Heart right ventricle (tissue), 16 donors: ENCODE measurements at regions of chr16 and their contacts with region 1.

Region 1: GRCh38 chr16:2429034-2429770 is at the start of gene CCNF:
- DNase-seq: peak; percentile 97 to 99
- ATAC-seq: peak; percentile 97 to 99 (median 99)
- H3K4me3 ChIP-seq: peak within 1 kb of the TSS; percentile 41 to 98 (median 84)
- H3K27ac ChIP-seq: peak within 1 kb of the TSS in 9 of 10 donors; percentile 50 to 89 (median 77)
- H3K4me1 ChIP-seq: peaks cover 6 to 22% (median 19%) of the 10 kb centered on the region in 9 donors
- H3K27me3 ChIP-seq: no peaks in the 10 kb centered on the region
- CTCF ChIP-seq: peak in 3 of 9 donors; percentile 12 to 32 (median 22)
- total RNA-seq, gene CCNF: 0.62 to 3.4 (median 1.1) TPM

Region 2: DNA sequence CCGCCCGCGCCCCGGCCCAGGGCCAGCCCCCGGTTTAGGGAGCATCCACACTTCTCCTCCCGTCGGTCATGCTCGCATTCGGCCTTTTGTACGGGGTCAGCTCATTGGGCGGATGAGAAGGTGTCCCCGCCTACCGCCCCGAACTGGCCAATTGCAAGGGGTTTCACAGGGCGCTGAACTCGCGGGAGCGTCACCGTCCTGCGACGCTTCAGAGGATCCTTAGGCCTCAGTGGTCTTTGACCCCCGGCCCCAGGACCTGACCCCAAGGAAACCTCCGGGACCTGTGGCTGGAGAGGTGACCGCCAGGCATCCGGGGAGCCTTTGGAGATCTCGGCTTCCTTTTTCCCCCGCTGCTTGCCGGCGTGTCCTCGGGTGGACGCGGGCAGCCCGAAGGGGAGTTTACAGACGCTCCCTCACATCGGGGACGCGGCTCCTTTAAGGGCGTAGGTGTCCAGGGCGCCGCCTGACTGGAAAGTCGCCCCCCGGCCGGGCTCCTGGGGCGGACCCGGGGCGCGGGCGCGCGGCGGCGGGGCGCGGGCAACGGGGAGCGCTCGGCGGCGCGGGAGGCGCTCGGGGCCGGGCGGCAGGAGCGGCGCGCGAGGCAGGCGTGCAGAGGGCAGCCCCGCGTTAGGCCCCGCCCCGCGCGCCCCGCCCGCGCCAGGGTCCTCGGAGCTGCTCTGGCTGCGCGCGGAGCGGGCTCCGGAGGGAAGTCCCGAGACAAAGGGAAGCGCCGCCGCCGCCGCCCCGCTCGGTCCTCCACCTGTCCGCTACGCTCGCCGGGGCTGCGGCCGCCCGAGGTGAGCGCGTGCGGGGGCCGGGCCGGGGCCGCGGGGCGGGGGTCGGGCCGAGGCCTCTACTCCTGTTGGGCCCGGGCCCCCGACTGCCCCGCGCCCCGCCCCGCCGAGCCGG is 1120.0 kb before region 1 on chr16 and contains the start of gene UBE2I:
- intact Hi-C with region 1: no loop called
- DNase-seq: peak; percentile 96 to 98
- ATAC-seq: peak; percentile 87 to 94 (median 88)
- H3K4me3 ChIP-seq: peak within 1 kb of the TSS; percentile 60 to 99 (median 84)
- H3K27ac ChIP-seq: peak within 1 kb of the TSS; percentile 96 to 100 (median 99)
- H3K4me1 ChIP-seq: peaks cover 21 to 41% (median 36%) of the 10 kb centered on the region in 9 donors
- H3K27me3 ChIP-seq: no peaks in the 10 kb centered on the region
- CTCF ChIP-seq: no peak
- total RNA-seq, gene UBE2I: 70.6 to 99.8 (median 84.6) TPM

Region 3: DNA sequence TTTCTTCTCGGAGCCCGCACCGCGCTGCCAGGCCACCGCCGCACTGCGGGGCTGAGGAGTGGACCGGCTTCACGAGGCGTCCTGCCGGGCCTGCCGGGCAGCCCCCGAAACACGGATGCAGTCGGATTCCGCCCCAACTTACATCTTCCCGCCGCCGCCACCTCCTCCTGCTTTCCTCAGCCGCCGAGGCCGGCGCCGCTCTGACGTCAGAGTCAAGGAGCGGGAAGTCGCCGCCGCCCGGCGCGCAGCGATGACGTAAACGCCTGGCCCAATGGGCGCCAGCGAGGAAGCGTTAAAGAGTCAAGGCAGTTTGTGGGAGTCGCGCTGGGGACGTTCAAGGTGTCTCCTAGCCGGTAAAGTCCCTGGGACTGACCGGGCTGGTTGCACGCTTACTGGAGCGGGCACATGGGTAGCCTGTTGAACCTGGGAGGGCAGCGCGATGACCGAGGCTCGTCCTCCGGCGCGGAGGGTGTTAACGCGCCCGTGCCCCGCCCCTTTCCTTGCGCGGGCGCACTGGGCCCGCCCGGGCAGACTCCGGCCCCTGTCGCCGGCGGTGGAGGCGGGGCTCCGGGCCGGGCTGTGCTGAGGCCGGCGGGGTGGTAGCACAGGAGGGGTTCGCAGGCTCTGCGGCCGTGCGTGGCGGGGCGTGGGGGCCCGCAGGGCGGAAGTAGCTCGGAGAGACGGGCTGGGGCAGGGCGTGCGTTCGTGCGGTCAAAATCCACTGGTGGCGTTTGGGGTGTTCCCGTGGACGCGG is 161.1 kb before region 1 on chr16 and contains the start of gene RNPS1:
- intact Hi-C with region 1: loop called in 1 of 10 experiments (anchors 5 kb)
- DNase-seq: peak; percentile 96 to 97
- ATAC-seq: peak; percentile 95 to 99 (median 98)
- H3K4me3 ChIP-seq: peak within 1 kb of the TSS; percentile 53 to 97 (median 87)
- H3K27ac ChIP-seq: peak within 1 kb of the TSS; percentile 80 to 100 (median 98)
- H3K4me1 ChIP-seq: peaks cover 7 to 46% (median 40%) of the 10 kb centered on the region in 9 donors
- H3K27me3 ChIP-seq: no peaks in the 10 kb centered on the region
- CTCF ChIP-seq: no peak
- total RNA-seq, gene RNPS1: 103 to 128 (median 118) TPM

Region 4: GRCh38 chr16:2340564-2341455 is 88.4 kb before region 1 on chr16 and contains the start of gene ABCA3:
- intact Hi-C with region 1: loop called in 8 of 10 experiments (anchors 2 to 10 kb)
- DNase-seq: peak; percentile 90 to 96
- ATAC-seq: peak; percentile 95 to 99 (median 96)
- H3K4me3 ChIP-seq: peak within 1 kb of the TSS; percentile 69 to 91 (median 80)
- H3K27ac ChIP-seq: peak within 1 kb of the TSS in 9 of 10 donors; percentile 4 to 64 (median 52)
- H3K4me1 ChIP-seq: peaks cover 0 to 21% (median 15%) of the 10 kb centered on the region in 9 donors
- H3K27me3 ChIP-seq: peaks cover 0 to 34% (median 0%) of the 10 kb centered on the region in 7 donors
- CTCF ChIP-seq: peak; percentile 99 to 100 (median 100)
- total RNA-seq, gene ABCA3: 7.7 to 12.5 (median 9.4) TPM

Region 5: GRCh38 chr16:2468725-2469398 is 39.7 kb after region 1 on chr16:
- intact Hi-C with region 1: loop called in 1 of 10 experiments (anchors 1 kb)
- DNase-seq: peak in 1 of 2 donors; percentile 51
- ATAC-seq: peak in 6 of 8 donors; percentile 6 to 47 (median 33)
- H3K4me3 ChIP-seq: peak overlapping the region in 7 of 10 donors; percentile 30 to 68 (median 53)
- H3K27ac ChIP-seq: no peak overlapping the region
- H3K4me1 ChIP-seq: peaks cover 20 to 55% (median 44%) of the 10 kb centered on the region in 9 donors
- H3K27me3 ChIP-seq: peaks cover 11 to 67% (median 42%) of the 10 kb centered on the region in 7 donors
- CTCF ChIP-seq: no peak

Region 6: DNA sequence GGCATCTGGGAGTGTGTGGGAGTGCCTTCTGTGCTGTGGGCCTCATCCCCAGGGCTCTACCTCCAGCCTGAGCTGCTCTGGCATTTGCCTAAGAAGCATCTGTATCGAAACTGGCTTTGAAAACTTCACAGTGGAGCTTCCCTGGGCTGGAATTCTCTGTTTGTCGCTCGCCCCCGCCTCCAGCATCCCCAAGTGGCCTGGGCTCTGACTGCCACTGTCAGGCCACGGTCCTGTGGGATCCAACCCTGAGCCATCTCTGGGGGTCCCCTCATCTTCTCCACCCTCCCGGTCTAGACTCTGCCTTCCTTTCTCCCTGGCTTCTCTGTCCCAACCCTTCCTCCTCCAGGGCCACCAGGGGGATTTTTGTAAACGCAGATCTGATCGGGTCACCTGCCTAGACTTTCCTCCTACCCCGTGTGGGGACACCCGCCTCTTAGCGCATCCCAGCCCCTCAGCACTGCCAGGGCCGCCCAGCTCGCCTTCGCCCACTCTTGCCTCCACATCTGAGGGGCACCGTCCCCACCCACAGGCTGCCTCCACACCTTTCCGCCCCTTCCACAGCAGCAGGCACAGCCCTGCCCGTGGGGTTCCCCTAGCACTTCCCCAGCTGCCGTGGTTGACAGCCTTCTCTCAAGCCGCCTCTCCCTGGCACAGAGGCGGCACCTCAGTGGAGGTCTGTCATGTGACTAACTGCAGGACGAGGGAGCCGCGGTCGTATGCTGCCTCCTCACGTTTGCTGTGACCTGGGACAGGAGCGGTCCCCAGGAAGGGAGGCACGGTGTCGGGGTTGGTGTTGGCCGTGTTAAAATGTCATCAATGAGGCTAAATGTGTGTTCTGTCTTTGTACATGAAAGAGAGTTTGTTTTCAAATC is 57.7 kb after region 1 on chr16:
- intact Hi-C with region 1: loop called in 1 of 10 experiments (anchors 10 kb)
- DNase-seq: peak in 1 of 2 donors; percentile 59
- ATAC-seq: peak; percentile 45 to 80 (median 64)
- H3K4me3 ChIP-seq: peak overlapping the region in 1 of 10 donors; percentile 2
- H3K27ac ChIP-seq: peak overlapping the region in 9 of 10 donors; percentile 32 to 70 (median 59)
- H3K4me1 ChIP-seq: peaks cover 6 to 45% (median 29%) of the 10 kb centered on the region in 9 donors
- H3K27me3 ChIP-seq: no peaks in the 10 kb centered on the region
- CTCF ChIP-seq: peak in 7 of 9 donors; percentile 18 to 51 (median 39)